ENCODE measurements at regions of chr11 and their contacts with region 1.

Region 1: GRCh38 chr11:111120161-111120560 is 125.4 kb upstream of the POU2AF2 start:
- DNase-seq: no peak

Region 2: GRCh38 chr11:111105566-111105965 is 14.6 kb before region 1 on chr11:
- intact Hi-C with region 1: no loop called
- DNase-seq: no peak

Region 3: DNA sequence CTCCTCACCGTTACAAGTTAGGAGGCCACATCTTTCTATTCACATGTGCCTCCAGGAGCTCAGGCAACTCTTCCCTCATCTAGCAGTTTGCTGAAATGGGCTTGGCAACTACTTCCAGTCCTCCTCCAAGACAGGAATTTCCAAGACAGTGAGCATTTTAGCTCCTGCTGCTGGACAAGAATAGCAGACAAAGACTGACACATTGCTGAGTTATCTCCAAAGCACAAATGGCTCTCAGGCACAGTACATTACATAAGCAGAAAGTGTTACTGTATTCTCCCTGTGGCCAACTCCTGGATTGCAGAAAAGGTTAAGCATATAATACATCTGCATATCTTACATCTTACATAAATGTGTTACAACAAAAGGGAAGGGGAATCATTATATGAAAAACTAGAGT is 42.1 kb after region 1 on chr11:
- intact Hi-C with region 1: loop called in 1 of 2 experiments (anchors 1 kb)
- DNase-seq: no peak

Region 4: GRCh38 chr11:112185883-112186282 is 1065.7 kb after region 1 on chr11:
- intact Hi-C with region 1: no loop called
- DNase-seq: no peak

Measured in posterior vena cava (tissue), 2 donors.